Dendritic cell treated with granulocyte-macrophage colony-stimulating factor and Interleukin-4, amounts not matched to agents 40 ng/mL and 50 ng/mL, for 4 days (primary cell): ENCODE measurements at regions of chr2 and their contacts with region 1.

Region 1: DNA sequence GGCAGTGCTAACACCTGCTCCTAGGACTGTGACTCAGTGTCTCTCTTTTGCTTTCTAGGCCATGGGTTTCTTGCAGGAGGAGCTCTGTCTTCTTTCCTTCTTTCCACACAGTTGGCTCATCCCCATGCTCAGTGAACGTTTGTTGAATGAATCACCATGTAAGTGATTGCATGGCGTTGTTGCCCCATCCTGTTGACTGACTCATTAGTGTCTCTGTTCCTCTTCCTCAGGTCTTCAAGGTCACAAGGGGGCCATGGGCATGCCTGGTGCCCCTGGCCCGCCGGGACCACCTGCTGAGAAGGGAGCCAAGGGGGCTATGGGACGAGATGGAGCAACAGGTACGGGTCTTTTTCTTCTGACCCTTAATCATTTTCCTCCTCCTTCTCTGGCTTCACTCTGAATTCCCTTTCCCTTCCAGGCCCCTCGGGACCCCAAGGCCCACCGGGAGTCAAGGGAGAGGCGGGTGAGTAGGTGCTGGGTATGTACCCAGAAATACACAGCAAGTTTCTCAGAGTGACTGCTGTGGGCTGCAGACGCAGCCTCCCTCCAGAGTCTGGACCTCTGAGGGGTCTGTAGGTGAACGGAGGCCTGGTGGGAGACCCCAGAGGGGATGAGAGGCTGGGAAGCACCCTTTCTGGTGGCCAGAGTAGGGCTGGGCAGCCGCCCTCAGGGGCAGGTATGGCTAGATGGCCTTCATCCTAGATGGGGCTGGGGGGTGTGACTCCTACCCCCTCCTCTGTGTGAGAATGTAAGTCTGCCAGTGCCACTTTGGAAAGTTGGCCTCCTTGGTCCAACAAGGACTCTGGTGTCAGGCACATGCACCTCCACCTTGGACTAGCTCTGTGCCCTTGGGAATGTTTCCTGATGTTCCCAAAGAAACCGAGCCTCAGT is 32.4 kb downstream of the MARCO start:
- H3K4me3 Mint-ChIP-seq: no peak overlapping the region
- H3K27ac Mint-ChIP-seq: peak overlapping the region; percentile 90
- H3K4me1 Mint-ChIP-seq: peaks cover 71% of the 10 kb centered on the region
- H3K27me3 Mint-ChIP-seq: peaks cover 3% of the 10 kb centered on the region

Region 2: GRCh38 chr2:118834901-118835745 is 139.2 kb before region 1 on chr2:
- intact Hi-C with region 1: no loop called
- H3K4me3 Mint-ChIP-seq: peak overlapping the region; percentile 71
- H3K27ac Mint-ChIP-seq: no peak overlapping the region
- H3K4me1 Mint-ChIP-seq: peaks cover 12% of the 10 kb centered on the region
- H3K27me3 Mint-ChIP-seq: peaks cover 96% of the 10 kb centered on the region

Region 3: GRCh38 chr2:118939994-118940393 is 34.4 kb before region 1 on chr2:
- intact Hi-C with region 1: loop called (anchors 5 kb)
- H3K4me3 Mint-ChIP-seq: no peak overlapping the region
- H3K27ac Mint-ChIP-seq: peak overlapping the region; percentile 73
- H3K4me1 Mint-ChIP-seq: peaks cover 32% of the 10 kb centered on the region
- H3K27me3 Mint-ChIP-seq: no peaks in the 10 kb centered on the region

Region 4: GRCh38 chr2:118954297-118955060 is 19.9 kb before region 1 on chr2:
- intact Hi-C with region 1: loop called (anchors 2 kb)
- H3K4me3 Mint-ChIP-seq: peak overlapping the region; percentile 45
- H3K27ac Mint-ChIP-seq: peak overlapping the region; percentile 98
- H3K4me1 Mint-ChIP-seq: peaks cover 73% of the 10 kb centered on the region
- H3K27me3 Mint-ChIP-seq: no peaks in the 10 kb centered on the region